Psoas muscle (tissue), 8 donors: ENCODE measurements at regions of chr11 and their contacts with region 1.

Region 1: GRCh38 chr11:848380-848931 is 5.8 kb downstream of the TSPAN4 start:
- DNase-seq: no peak
- ATAC-seq: peak; percentile 36 to 56 (median 54)
- H3K4me3 ChIP-seq: no peak overlapping the region
- H3K27ac ChIP-seq: no peak overlapping the region
- H3K4me1 ChIP-seq: peaks cover 28% of the 10 kb centered on the region
- H3K27me3 ChIP-seq: peaks cover 0 to 11% (median 0%) of the 10 kb centered on the region in 3 donors
- CTCF ChIP-seq: peak; percentile 89

Region 2: DNA sequence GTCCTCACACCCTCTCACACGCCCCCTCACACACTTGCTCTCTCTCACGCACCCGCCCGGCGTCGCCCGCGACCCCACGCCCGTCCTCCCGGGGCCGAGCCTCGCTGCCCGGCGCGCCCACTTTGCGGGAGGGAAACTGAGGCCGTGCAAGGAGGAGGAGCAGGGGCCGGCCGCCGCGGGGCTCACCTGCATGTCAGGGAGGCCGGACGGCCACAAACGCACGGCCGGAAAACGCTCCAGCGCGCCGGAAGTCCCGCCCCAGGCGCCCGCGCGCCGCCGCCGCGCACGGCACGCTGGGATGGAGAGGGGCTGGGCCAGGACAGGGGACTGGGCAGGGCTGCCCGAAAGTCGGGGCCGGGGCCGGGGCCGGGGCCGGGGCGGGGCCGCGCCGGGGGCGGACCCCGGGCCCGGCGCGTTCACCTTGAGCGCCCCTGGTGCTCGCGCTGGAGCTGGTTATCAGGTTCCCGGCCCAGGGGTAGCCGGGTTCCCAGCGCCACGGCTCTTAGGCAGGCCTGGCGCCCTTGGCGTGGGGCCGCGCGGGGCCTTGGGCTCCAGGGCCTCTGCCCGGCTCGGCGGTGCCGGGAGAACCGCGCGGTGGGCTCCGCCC is 62.2 kb after region 1 on chr11 and contains the start of gene CHID1:
- intact Hi-C with region 1: loop called (anchors 5 kb)
- DNase-seq: peak; percentile 87 to 94
- ATAC-seq: peak; percentile 94 to 97 (median 95)
- H3K4me3 ChIP-seq: peak within 1 kb of the TSS; percentile 72
- H3K27ac ChIP-seq: peak within 1 kb of the TSS; percentile 82
- H3K4me1 ChIP-seq: peaks cover 15% of the 10 kb centered on the region
- H3K27me3 ChIP-seq: no peaks in the 10 kb centered on the region
- CTCF ChIP-seq: no peak
- total RNA-seq, gene CHID1: 31.2 to 44.5 (median 34.7) TPM

Region 3: GRCh38 chr11:925496-926321 is 77.3 kb after region 1 on chr11 and contains the start of gene AP2A2:
- intact Hi-C with region 1: loop called in 1 of 2 experiments (anchors 5 kb)
- DNase-seq: peak; percentile 95
- ATAC-seq: peak; percentile 93 to 96 (median 94)
- H3K4me3 ChIP-seq: peak within 1 kb of the TSS; percentile 80
- H3K27ac ChIP-seq: peak within 1 kb of the TSS; percentile 86
- H3K4me1 ChIP-seq: peaks cover 23% of the 10 kb centered on the region
- H3K27me3 ChIP-seq: no peaks in the 10 kb centered on the region
- CTCF ChIP-seq: peak; percentile 83
- total RNA-seq, gene AP2A2: 26.5 to 31.4 (median 27.7) TPM

Region 4: DNA sequence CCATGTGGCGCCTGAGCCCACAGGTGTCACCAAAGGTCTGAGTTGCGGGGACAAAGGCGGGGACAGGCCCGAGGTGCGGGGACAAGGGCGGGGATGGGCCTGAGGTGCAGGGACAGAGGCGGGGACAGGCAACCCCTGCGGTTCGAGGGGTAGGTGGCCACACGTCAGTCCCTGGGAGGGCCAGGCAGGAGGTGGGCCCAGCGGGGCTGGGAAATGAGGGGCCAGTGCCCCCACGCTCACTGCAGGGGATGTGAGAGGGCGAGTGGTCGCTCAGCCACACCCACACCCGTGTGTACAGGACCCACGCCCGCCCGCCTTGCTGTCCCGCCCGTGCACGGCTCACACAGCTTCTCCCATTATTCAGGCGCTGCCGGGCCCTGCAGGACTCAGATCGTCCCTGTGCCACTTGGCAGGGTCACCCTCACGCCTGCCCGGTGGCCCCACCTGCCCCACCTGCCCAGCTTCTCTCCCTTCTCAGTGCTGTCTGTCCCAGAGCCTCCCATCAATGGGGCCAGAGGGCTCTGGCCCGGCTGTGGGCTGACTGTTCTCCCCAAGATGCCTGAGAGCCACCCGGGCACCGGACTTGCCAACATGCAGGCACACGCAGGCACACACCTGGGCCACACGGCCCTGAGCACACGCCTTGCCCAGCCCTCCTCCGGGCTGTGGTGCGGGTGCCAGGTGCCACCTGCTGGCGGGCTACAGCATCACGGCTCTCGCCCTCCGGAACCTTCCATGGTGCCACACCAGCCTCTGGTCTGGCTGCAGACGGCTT is 202.3 kb after region 1 on chr11:
- intact Hi-C with region 1: loop called (anchors 1 to 2 kb)
- DNase-seq: peak; percentile 52 to 81
- ATAC-seq: peak; percentile 92 to 99 (median 96)
- H3K4me3 ChIP-seq: no peak overlapping the region
- H3K27ac ChIP-seq: no peak overlapping the region
- H3K4me1 ChIP-seq: no peaks in the 10 kb centered on the region
- H3K27me3 ChIP-seq: peaks cover 0 to 24% (median 16%) of the 10 kb centered on the region in 3 donors
- CTCF ChIP-seq: peak; percentile 87